ENCODE measurements at regions of chr3 and their contacts with region 1.

Region 1: DNA sequence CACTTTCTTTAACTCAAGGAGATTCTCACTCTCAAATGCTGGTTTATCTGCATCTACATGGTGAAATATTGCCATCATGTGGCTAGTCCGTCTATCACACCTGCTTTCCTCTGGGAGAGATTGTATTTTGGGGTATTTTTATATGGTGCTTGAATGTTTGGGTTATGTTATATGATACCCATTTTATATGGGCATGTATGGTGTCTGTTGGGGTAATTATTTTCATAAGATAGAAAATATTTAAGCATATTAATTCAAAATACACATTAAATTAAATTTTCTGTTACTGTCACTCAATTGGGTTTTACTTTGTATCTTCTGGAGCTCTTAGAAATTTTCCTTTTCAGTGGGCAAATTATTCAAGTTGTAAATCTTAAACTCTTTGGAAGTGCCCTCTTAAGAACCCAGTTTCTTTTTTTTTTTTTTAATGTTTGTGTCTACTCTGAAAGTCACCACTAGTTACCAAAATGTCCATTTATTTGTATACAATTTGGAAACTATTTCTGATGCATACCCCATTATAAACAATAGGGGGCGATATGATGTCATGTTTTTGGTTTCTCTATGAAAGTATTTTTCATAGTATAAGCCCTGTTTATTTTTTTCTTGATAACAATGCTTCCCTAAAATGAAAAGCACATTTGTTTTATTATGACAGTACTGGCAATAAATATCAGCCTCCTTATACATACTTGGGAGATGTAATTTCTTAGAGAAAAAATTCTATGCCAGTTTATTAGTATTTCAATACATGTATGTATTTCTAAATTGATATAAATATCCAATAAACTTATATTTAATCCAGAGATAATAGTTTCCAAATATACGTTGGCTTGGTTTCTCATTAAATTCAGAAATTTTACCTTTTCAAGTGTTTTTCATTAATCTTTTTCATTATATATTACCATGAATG is 36.1 kb upstream of the PLSCR5 start:
- DNase-seq: peak; percentile 42
- ATAC-seq: peak; percentile 85
- H3K4me3 ChIP-seq: no peak overlapping the region
- H3K27ac ChIP-seq: no peak overlapping the region
- H3K4me1 ChIP-seq: no peaks in the 10 kb centered on the region
- H3K27me3 ChIP-seq: no peaks in the 10 kb centered on the region
- CTCF ChIP-seq: peak; percentile 64 to 73 (median 64)
- POLR2A ChIP-seq: no peak
- RAD21 ChIP-seq: peak; percentile 79

Region 2: GRCh38 chr3:146065573-146066006 is 575.6 kb before region 1 on chr3:
- CTCF ChIA-PET with region 1: interaction called, 9 read pairs
- POLR2A ChIA-PET with region 1: no interaction called
- RAD21 ChIA-PET with region 1: no interaction called
- intact Hi-C with region 1: loop called (anchors 10 kb)
- DNase-seq: peak; percentile 38
- ATAC-seq: no peak
- H3K4me3 ChIP-seq: no peak overlapping the region
- H3K27ac ChIP-seq: no peak overlapping the region
- H3K4me1 ChIP-seq: no peaks in the 10 kb centered on the region
- H3K27me3 ChIP-seq: no peaks in the 10 kb centered on the region
- CTCF ChIP-seq: peak; percentile 57 to 70 (median 63)
- POLR2A ChIP-seq: no peak
- RAD21 ChIP-seq: peak; percentile 80

Region 3: DNA sequence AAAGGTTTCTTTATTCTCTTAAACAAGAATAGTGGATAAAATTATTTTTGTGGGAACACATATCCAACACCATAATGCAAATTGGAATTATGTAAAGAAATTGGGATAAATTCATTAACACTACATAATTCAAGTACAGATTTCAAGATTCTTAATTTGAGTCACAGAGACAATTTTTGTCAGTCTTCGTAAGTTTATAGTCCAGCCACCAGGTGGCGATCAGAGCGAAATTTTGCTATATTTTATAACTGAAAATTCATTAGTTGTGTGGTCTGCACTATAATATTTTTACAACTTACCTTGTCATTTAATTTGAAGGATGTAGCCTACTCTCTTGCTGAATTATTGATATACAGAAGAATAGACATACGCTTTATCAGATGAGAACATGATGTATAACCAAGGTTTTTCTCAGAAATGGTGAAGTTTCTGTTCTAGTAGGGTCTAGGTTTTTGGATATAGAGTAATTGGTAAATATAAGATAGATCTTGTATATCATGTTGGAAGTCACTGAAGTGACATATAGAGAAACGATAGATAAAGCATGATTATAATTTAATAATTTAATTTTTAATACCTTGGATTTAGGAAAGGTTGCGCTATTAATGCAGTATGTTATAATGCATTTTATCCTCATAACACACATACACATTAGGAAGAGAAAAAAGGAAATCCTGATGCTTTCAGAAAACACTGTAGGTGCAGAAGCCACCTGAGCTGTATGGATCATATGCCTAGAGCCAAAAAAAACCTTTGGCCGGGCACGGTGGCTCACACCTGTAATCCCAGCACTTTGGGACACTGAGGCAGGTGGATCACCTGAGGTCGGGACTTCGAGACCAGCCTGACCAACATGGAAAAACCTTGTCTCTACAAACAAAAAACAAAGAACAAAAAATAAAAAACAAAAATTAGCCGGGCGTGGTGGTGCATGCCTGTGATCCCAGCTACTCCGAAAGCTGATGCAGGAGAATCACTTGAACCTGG is 422.0 kb before region 1 on chr3:
- CTCF ChIA-PET with region 1: interaction called, 4 read pairs
- POLR2A ChIA-PET with region 1: no interaction called
- RAD21 ChIA-PET with region 1: no interaction called
- intact Hi-C with region 1: loop called (anchors 5 kb)
- DNase-seq: no peak
- ATAC-seq: no peak
- H3K4me3 ChIP-seq: no peak overlapping the region
- H3K27ac ChIP-seq: no peak overlapping the region
- H3K4me1 ChIP-seq: peaks cover 5 to 14% of the 10 kb centered on the region in 2 experiments; a peak in 3 of 4 replicates
- H3K27me3 ChIP-seq: no peaks in the 10 kb centered on the region
- CTCF ChIP-seq: peak; percentile 46 to 75 (median 71)
- POLR2A ChIP-seq: no peak
- RAD21 ChIP-seq: peak; percentile 70

Region 4: DNA sequence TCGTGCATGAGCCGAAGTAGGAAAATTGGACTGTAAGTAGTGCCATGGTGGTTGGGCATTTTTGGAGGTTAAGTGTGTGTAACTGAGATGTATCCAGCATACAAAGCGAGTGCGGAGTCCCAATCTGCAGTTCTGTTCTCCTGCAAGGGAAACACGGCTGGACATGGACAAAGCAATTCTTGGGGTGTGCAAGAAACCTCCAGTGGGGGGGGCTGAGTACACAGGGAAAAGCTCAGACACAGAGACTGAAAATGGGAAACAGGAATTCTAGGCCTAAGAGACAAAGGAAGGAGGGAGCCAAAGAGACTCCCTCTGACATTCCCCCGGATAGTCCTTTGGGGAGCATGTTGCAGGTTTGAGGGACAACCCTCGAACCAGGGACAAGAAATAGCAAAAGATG is 307.1 kb before region 1 on chr3:
- CTCF ChIA-PET with region 1: no interaction called
- POLR2A ChIA-PET with region 1: no interaction called
- RAD21 ChIA-PET with region 1: no interaction called
- intact Hi-C with region 1: loop called (anchors 5 kb)
- DNase-seq: no peak
- ATAC-seq: no peak
- H3K4me3 ChIP-seq: no peak overlapping the region
- H3K27ac ChIP-seq: no peak overlapping the region
- H3K4me1 ChIP-seq: no peaks in the 10 kb centered on the region
- H3K27me3 ChIP-seq: no peaks in the 10 kb centered on the region
- CTCF ChIP-seq: peak in 2 of 3 experiments; percentile 14 to 29; a peak in 1 of 6 replicates
- POLR2A ChIP-seq: no peak
- RAD21 ChIP-seq: peak; percentile 65

Region 5: GRCh38 chr3:146589899-146590508 is 51.2 kb before region 1 on chr3:
- CTCF ChIA-PET with region 1: interaction called, 37 read pairs
- POLR2A ChIA-PET with region 1: no interaction called
- RAD21 ChIA-PET with region 1: no interaction called
- intact Hi-C with region 1: loop called (anchors 1 kb)
- DNase-seq: peak; percentile 27
- ATAC-seq: no peak; the same call in 1 of the 2 replicates
- H3K4me3 ChIP-seq: no peak overlapping the region
- H3K27ac ChIP-seq: no peak overlapping the region
- H3K4me1 ChIP-seq: no peaks in the 10 kb centered on the region
- H3K27me3 ChIP-seq: no peaks in the 10 kb centered on the region
- CTCF ChIP-seq: peak; percentile 47 to 68 (median 63); a peak in 5 of 6 replicates
- POLR2A ChIP-seq: no peak
- RAD21 ChIP-seq: peak; percentile 71

Region 6: GRCh38 chr3:146626403-146627122 is 14.6 kb before region 1 on chr3:
- CTCF ChIA-PET with region 1: interaction called, 27 read pairs
- POLR2A ChIA-PET with region 1: no interaction called
- RAD21 ChIA-PET with region 1: no interaction called
- intact Hi-C with region 1: no loop called
- DNase-seq: no peak
- ATAC-seq: no peak
- H3K4me3 ChIP-seq: no peak overlapping the region
- H3K27ac ChIP-seq: no peak overlapping the region
- H3K4me1 ChIP-seq: no peaks in the 10 kb centered on the region; a peak in 1 of 4 replicates
- H3K27me3 ChIP-seq: no peaks in the 10 kb centered on the region
- CTCF ChIP-seq: no peak
- POLR2A ChIP-seq: no peak
- RAD21 ChIP-seq: no peak

Region 7: GRCh38 chr3:147191795-147192385 is 550.7 kb after region 1 on chr3:
- CTCF ChIA-PET with region 1: no interaction called
- POLR2A ChIA-PET with region 1: no interaction called
- RAD21 ChIA-PET with region 1: no interaction called
- intact Hi-C with region 1: loop called (anchors 10 kb)
- DNase-seq: peak; percentile 68
- ATAC-seq: peak; percentile 60; the same call in 1 of the 2 replicates
- H3K4me3 ChIP-seq: no peak overlapping the region
- H3K27ac ChIP-seq: no peak overlapping the region
- H3K4me1 ChIP-seq: no peaks in the 10 kb centered on the region
- H3K27me3 ChIP-seq: no peaks in the 10 kb centered on the region
- CTCF ChIP-seq: peak; percentile 42 to 86 (median 82); a peak in 5 of 6 replicates
- POLR2A ChIP-seq: no peak
- RAD21 ChIP-seq: peak; percentile 67